Naive thymus-derived CD4-positive, alpha-beta T cell (primary cell): ENCODE measurements at regions of chr15 and their contacts with region 1.

Region 1: GRCh38 chr15:68559345-68560310 is 19.2 kb upstream of the CORO2B start:
- DNase-seq: peak; percentile 45 to 82 (median 72)
- ATAC-seq: peak; percentile 93
- H3K4me3 ChIP-seq: peak overlapping the region; percentile 49
- H3K4me3 Mint-ChIP-seq: peak overlapping the region; percentile 42 to 93 (median 84)
- H3K27ac ChIP-seq: no peak overlapping the region
- H3K27ac Mint-ChIP-seq: peak overlapping the region in 1 of 9 donors; percentile 65
- H3K4me1 ChIP-seq: peaks cover 4 to 9% of the 10 kb centered on the region in 2 donors
- H3K4me1 Mint-ChIP-seq: peaks cover 14 to 22% (median 17%) of the 10 kb centered on the region in 7 donors
- H3K27me3 ChIP-seq: peaks cover 0 to 4% of the 10 kb centered on the region in 2 donors
- H3K27me3 Mint-ChIP-seq: peaks cover 54 to 67% (median 56%) of the 10 kb centered on the region in 5 donors

Region 2: DNA sequence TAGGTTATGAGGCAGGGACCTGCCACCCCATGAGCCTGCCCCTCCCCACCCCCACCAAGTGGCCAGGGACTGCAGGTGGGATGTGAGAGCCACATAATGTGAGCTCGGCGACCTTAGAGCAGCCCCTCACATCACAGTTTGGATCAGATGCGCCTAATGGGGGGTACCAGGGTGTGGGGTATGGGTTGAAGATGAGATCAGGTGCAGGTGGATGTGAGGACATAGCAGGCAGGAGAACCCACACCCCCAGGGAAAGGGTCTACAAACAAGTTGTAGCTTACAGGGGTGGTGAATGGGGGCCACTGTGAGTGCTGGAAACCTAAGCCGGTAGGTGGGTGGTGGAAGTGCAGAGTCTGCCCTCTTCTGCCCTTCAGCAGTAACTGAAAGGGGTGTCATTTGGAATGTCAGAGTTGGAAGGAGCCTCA is 113.2 kb after region 1 on chr15:
- CTCF ChIA-PET with region 1: interaction called, 4 read pairs
- POLR2A ChIA-PET with region 1: no interaction called
- intact Hi-C with region 1: loop called (anchors 1 to 2 kb)
- DNase-seq: no peak
- ATAC-seq: no peak
- H3K4me3 ChIP-seq: no peak overlapping the region
- H3K4me3 Mint-ChIP-seq: no peak overlapping the region
- H3K27ac ChIP-seq: no peak overlapping the region
- H3K27ac Mint-ChIP-seq: no peak overlapping the region
- H3K4me1 ChIP-seq: no peaks in the 10 kb centered on the region
- H3K4me1 Mint-ChIP-seq: peaks cover 0 to 6% (median 4%) of the 10 kb centered on the region in 7 donors
- H3K27me3 ChIP-seq: no peaks in the 10 kb centered on the region
- H3K27me3 Mint-ChIP-seq: peaks cover 6 to 17% (median 12%) of the 10 kb centered on the region in 5 donors

Region 3: DNA sequence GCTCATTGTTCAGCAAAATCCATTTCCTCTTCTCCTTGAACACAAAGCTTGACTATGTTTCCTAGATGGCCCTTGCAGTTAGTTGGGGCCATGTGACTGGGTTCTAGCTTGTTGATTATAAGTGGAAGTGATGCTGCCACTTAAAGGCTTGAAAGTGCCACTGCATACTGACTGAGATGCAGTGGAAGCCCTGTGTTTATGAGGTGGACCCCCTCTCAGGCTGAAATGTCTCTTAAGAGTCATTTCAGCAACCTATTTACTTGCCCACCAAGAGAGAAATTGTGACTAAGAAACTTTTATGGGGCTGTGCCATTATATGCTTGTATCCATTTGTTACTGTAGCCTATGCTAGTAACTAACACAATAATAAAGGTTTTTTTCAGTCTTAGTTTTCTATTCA is 269.4 kb after region 1 on chr15:
- CTCF ChIA-PET with region 1: interaction called, 3 read pairs
- POLR2A ChIA-PET with region 1: no interaction called
- intact Hi-C with region 1: loop called in 1 of 2 experiments (anchors 1 kb)
- DNase-seq: peak in 6 of 9 donors; percentile 17 to 41 (median 22)
- ATAC-seq: peak; percentile 85
- H3K4me3 ChIP-seq: no peak overlapping the region
- H3K4me3 Mint-ChIP-seq: no peak overlapping the region
- H3K27ac ChIP-seq: no peak overlapping the region
- H3K27ac Mint-ChIP-seq: no peak overlapping the region
- H3K4me1 ChIP-seq: peaks cover 0 to 4% of the 10 kb centered on the region in 2 donors
- H3K4me1 Mint-ChIP-seq: peaks cover 9 to 28% (median 19%) of the 10 kb centered on the region in 7 donors
- H3K27me3 ChIP-seq: no peaks in the 10 kb centered on the region
- H3K27me3 Mint-ChIP-seq: peaks cover 0 to 11% (median 0%) of the 10 kb centered on the region in 5 donors

Region 4: GRCh38 chr15:68875377-68876116 is 315.9 kb after region 1 on chr15:
- CTCF ChIA-PET with region 1: interaction called, 10 read pairs
- POLR2A ChIA-PET with region 1: no interaction called
- intact Hi-C with region 1: loop called (anchors 1 kb)
- DNase-seq: peak; percentile 81 to 92 (median 87)
- ATAC-seq: peak; percentile 83
- H3K4me3 ChIP-seq: no peak overlapping the region
- H3K4me3 Mint-ChIP-seq: peak overlapping the region; percentile 2 to 72 (median 58)
- H3K27ac ChIP-seq: no peak overlapping the region
- H3K27ac Mint-ChIP-seq: no peak overlapping the region
- H3K4me1 ChIP-seq: peaks cover 0 to 4% of the 10 kb centered on the region in 2 donors
- H3K4me1 Mint-ChIP-seq: peaks cover 0 to 7% (median 0%) of the 10 kb centered on the region in 7 donors
- H3K27me3 ChIP-seq: no peaks in the 10 kb centered on the region
- H3K27me3 Mint-ChIP-seq: peaks cover 5 to 53% (median 22%) of the 10 kb centered on the region in 5 donors

Region 5: DNA sequence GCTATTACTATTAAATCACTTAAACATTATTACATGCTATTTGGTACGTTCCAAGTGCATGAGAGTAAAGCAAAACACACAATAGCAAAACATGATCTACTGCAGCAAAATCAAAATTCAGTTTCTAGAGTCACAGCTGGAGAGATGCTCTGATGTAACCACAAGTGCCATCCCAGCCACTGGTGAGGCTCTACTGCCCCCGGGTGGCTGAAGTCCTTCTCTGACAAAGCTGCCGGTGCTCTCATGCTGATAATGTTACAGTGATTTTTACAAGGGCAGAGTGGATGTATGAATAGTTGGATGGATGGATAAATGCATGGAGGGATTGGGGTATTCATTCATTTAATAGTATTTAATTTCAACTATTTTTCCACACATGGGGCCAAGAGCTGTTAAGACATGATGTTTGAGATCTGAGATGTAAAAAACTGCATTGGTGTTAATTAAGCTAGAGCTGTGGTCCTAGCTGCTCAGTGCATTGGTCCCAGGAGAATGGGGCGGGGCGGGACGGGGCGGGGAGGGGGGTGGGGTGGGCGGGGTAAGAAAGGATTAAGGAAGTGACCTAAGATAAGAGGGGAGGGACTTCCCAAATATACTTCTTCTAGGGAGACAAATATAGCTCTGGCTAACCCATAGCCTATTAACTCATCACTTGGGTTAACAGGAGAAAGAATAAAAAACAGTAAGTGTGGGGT is 365.4 kb after region 1 on chr15:
- CTCF ChIA-PET with region 1: interaction called, 6 read pairs
- POLR2A ChIA-PET with region 1: no interaction called
- intact Hi-C with region 1: loop called (anchors 1 to 2 kb)
- DNase-seq: peak; percentile 22 to 61 (median 50)
- ATAC-seq: peak; percentile 74
- H3K4me3 ChIP-seq: no peak overlapping the region
- H3K4me3 Mint-ChIP-seq: no peak overlapping the region
- H3K27ac ChIP-seq: no peak overlapping the region
- H3K27ac Mint-ChIP-seq: no peak overlapping the region
- H3K4me1 ChIP-seq: no peaks in the 10 kb centered on the region
- H3K4me1 Mint-ChIP-seq: peaks cover 0 to 5% (median 0%) of the 10 kb centered on the region in 7 donors
- H3K27me3 ChIP-seq: no peaks in the 10 kb centered on the region
- H3K27me3 Mint-ChIP-seq: peaks cover 17 to 36% (median 24%) of the 10 kb centered on the region in 5 donors